HCT116 (cell line): ENCODE measurements at regions of chr12 and their contacts with region 1.

Region 1: GRCh38 chr12:30172470-30172869 is 388.7 kb upstream of the TMTC1 start:
- DNase-seq: no peak
- ATAC-seq: no peak
- H3K4me3 ChIP-seq: no peak overlapping the region
- H3K27ac ChIP-seq: no peak overlapping the region
- H3K4me1 ChIP-seq: no peaks in the 10 kb centered on the region
- H3K27me3 ChIP-seq: no peaks in the 10 kb centered on the region
- CTCF ChIP-seq: no peak
- POLR2A ChIP-seq: no peak
- RAD21 ChIP-seq: no peak

Region 2: GRCh38 chr12:29743801-29744200 is 428.7 kb before region 1 on chr12:
- CTCF ChIA-PET with region 1: no interaction called
- POLR2A ChIA-PET with region 1: no interaction called
- RAD21 ChIA-PET with region 1: no interaction called
- intact Hi-C with region 1: no loop called
- DNase-seq: no peak
- ATAC-seq: no peak
- H3K4me3 ChIP-seq: no peak overlapping the region
- H3K27ac ChIP-seq: no peak overlapping the region
- H3K4me1 ChIP-seq: peaks cover 0 to 6% of the 10 kb centered on the region in 2 experiments; a peak in 1 of 4 replicates
- H3K27me3 ChIP-seq: no peaks in the 10 kb centered on the region
- CTCF ChIP-seq: no peak
- POLR2A ChIP-seq: no peak
- RAD21 ChIP-seq: no peak

Region 3: DNA sequence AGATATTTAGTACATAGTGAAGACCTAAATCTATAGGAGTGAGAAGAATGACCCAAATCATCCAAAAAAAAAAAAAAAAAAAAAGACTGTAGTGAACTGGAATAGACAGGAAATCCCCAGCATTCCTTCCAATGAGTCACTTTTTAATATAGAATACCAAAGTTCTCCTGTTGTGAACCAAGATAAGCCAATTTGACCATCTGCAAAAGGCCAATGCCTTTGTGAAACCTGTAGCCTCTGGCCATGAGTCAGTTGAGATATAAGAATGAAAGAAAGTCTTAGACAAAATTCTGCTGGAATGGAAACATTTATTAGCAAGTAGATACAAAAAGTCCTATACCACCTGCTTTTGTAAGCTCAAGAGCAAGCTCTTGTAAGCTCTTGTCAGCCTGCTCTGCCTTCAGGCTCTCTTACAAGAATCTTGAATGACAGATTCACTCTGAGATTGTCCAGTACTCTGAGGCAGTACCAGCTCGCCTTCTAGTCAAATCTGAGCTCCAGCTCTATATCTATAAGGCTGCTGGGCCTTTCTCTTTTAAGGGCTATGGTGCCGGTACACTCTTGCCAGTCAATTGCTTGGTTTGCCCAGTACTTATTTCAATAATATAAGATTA is 145.7 kb before region 1 on chr12:
- CTCF ChIA-PET with region 1: no interaction called
- POLR2A ChIA-PET with region 1: no interaction called
- RAD21 ChIA-PET with region 1: no interaction called
- intact Hi-C with region 1: no loop called
- DNase-seq: no peak
- ATAC-seq: no peak
- H3K4me3 ChIP-seq: no peak overlapping the region
- H3K27ac ChIP-seq: no peak overlapping the region
- H3K4me1 ChIP-seq: peaks cover 0 to 5% of the 10 kb centered on the region in 2 experiments; a peak in 1 of 4 replicates
- H3K27me3 ChIP-seq: no peaks in the 10 kb centered on the region
- CTCF ChIP-seq: no peak
- POLR2A ChIP-seq: no peak
- RAD21 ChIP-seq: no peak

Region 4: GRCh38 chr12:30201301-30202160 is 29.1 kb after region 1 on chr12:
- CTCF ChIA-PET with region 1: no interaction called
- POLR2A ChIA-PET with region 1: no interaction called
- RAD21 ChIA-PET with region 1: no interaction called
- intact Hi-C with region 1: loop called (anchors 1 kb)
- DNase-seq: no peak
- ATAC-seq: no peak
- H3K4me3 ChIP-seq: no peak overlapping the region
- H3K27ac ChIP-seq: no peak overlapping the region
- H3K4me1 ChIP-seq: no peaks in the 10 kb centered on the region
- H3K27me3 ChIP-seq: peaks cover 4% of the 10 kb centered on the region; the same call in 1 of the 2 replicates
- CTCF ChIP-seq: no peak
- POLR2A ChIP-seq: no peak
- RAD21 ChIP-seq: no peak

Region 5: DNA sequence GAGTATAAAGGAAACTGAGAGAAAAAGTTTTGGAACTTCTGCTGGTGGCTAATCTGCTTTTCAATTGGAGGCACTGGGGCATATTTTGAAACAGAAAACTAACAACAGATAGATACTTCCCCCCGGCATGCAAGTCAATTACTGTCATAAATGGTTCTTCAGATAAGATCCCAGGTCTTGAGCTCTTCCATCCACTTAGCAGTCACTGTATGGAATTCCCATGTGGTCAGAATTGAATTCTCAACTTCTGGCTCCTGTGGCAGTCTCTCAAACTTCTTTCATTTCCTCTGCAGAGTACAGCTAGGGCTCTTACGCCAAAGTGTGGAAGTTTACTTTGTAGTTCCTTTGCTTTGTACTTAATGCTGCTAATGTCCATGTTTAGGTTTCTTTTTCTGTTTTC is 71.0 kb after region 1 on chr12:
- CTCF ChIA-PET with region 1: no interaction called
- POLR2A ChIA-PET with region 1: no interaction called
- RAD21 ChIA-PET with region 1: no interaction called
- intact Hi-C with region 1: no loop called
- DNase-seq: no peak
- ATAC-seq: no peak
- H3K4me3 ChIP-seq: no peak overlapping the region
- H3K27ac ChIP-seq: no peak overlapping the region
- H3K4me1 ChIP-seq: no peaks in the 10 kb centered on the region
- H3K27me3 ChIP-seq: no peaks in the 10 kb centered on the region
- CTCF ChIP-seq: no peak
- POLR2A ChIP-seq: no peak
- RAD21 ChIP-seq: no peak